ENCODE measurements at regions of chr22 and their contacts with region 1.

Region 1: GRCh38 chr22:41327124-41327523 is 25.8 kb downstream of the ZC3H7B start:
- DNase-seq: no peak
- H3K4me3 ChIP-seq: no peak overlapping the region
- H3K27ac ChIP-seq: no peak overlapping the region
- H3K4me1 ChIP-seq: no peaks in the 10 kb centered on the region
- H3K27me3 ChIP-seq: no peaks in the 10 kb centered on the region
- CTCF ChIP-seq: no peak

Region 2: GRCh38 chr22:41226723-41227655 is 100.1 kb before region 1 on chr22:
- CTCF ChIA-PET with region 1: no interaction called
- dilution Hi-C with region 1: no loop called
- in situ Hi-C with region 1: no loop called
- intact Hi-C with region 1: no loop called
- DNase-seq: no peak
- H3K4me3 ChIP-seq: no peak overlapping the region
- H3K27ac ChIP-seq: no peak overlapping the region
- H3K4me1 ChIP-seq: peaks cover 6% of the 10 kb centered on the region
- H3K27me3 ChIP-seq: no peaks in the 10 kb centered on the region
- CTCF ChIP-seq: no peak

Region 3: DNA sequence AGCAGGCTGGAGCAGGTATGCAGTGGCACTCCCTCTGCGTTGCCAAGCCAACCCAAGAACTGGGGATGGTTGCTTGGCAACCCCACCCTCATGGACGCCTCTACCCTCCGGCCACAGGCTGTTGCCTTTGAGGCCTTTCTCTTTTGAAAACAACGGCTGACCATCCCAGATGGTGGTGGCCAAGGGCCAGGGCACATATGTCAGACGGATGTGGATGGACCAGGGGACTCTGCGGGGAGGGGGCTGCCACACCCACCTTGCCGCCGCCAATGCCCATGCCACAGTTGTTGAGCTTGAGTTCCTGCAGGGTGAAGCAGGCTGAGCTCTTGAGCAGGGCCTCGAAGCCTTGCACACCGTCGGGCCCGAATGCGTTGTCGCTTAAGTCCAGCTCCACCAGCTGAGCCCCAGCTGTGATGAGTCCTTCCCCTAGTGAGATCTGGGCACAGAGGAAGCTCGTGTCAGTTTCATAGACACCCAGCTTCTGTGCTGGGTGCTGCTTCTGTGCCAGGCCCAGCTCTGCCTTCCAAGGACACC is 62.6 kb before region 1 on chr22:
- CTCF ChIA-PET with region 1: no interaction called
- dilution Hi-C with region 1: loop called (anchors 5 kb)
- in situ Hi-C with region 1: no loop called
- intact Hi-C with region 1: no loop called
- DNase-seq: no peak
- H3K4me3 ChIP-seq: no peak overlapping the region
- H3K27ac ChIP-seq: no peak overlapping the region
- H3K4me1 ChIP-seq: no peaks in the 10 kb centered on the region
- H3K27me3 ChIP-seq: no peaks in the 10 kb centered on the region
- CTCF ChIP-seq: no peak

Region 4: GRCh38 chr22:41360126-41360525 is 33.0 kb after region 1 on chr22:
- CTCF ChIA-PET with region 1: no interaction called
- dilution Hi-C with region 1: loop called (anchors 5 kb)
- in situ Hi-C with region 1: no loop called
- intact Hi-C with region 1: no loop called
- DNase-seq: no peak
- H3K4me3 ChIP-seq: no peak overlapping the region
- H3K27ac ChIP-seq: no peak overlapping the region
- H3K4me1 ChIP-seq: peaks cover 4% of the 10 kb centered on the region
- H3K27me3 ChIP-seq: no peaks in the 10 kb centered on the region
- CTCF ChIP-seq: no peak

Measured in mammary epithelial cell (primary cell).